ENCODE measurements at regions of chr19 and their contacts with region 1.

Region 1: GRCh38 chr19:14059093-14059480 is 2.8 kb downstream of the PALM3 start:
- DNase-seq: no peak
- ATAC-seq: peak; percentile 55; the same call in 1 of the 2 replicates
- H3K4me3 ChIP-seq: peak overlapping the region in 1 of 2 experiments; percentile 56; a peak in 2 of 4 replicates
- H3K27ac ChIP-seq: no peak overlapping the region
- H3K4me1 ChIP-seq: peaks cover 22 to 36% of the 10 kb centered on the region in 2 experiments
- H3K27me3 ChIP-seq: no peaks in the 10 kb centered on the region
- CTCF ChIP-seq: peak; percentile 41 to 92 (median 90); a peak in 5 of 6 replicates
- POLR2A ChIP-seq: no peak
- RAD21 ChIP-seq: peak; percentile 36

Region 2: GRCh38 chr19:14048443-14049153 is 10.5 kb before region 1 on chr19:
- CTCF ChIA-PET with region 1: interaction called, 31 read pairs
- POLR2A ChIA-PET with region 1: no interaction called
- RAD21 ChIA-PET with region 1: no interaction called
- intact Hi-C with region 1: no loop called
- DNase-seq: no peak
- ATAC-seq: peak; percentile 90
- H3K4me3 ChIP-seq: no peak overlapping the region
- H3K27ac ChIP-seq: no peak overlapping the region
- H3K4me1 ChIP-seq: no peaks in the 10 kb centered on the region
- H3K27me3 ChIP-seq: no peaks in the 10 kb centered on the region
- CTCF ChIP-seq: peak; percentile 38 to 98 (median 98); a peak in 5 of 6 replicates
- POLR2A ChIP-seq: no peak
- RAD21 ChIP-seq: peak; percentile 49

Region 3: GRCh38 chr19:14218620-14219330 is 159.7 kb after region 1 on chr19:
- CTCF ChIA-PET with region 1: no interaction called
- POLR2A ChIA-PET with region 1: no interaction called
- RAD21 ChIA-PET with region 1: no interaction called
- intact Hi-C with region 1: no loop called
- DNase-seq: no peak
- ATAC-seq: no peak
- H3K4me3 ChIP-seq: no peak overlapping the region
- H3K27ac ChIP-seq: no peak overlapping the region
- H3K4me1 ChIP-seq: peaks cover 9 to 18% of the 10 kb centered on the region in 2 experiments; a peak in 3 of 4 replicates
- H3K27me3 ChIP-seq: no peaks in the 10 kb centered on the region
- CTCF ChIP-seq: no peak
- POLR2A ChIP-seq: no peak
- RAD21 ChIP-seq: no peak

Measured in HCT116 (cell line).